ENCODE measurements at regions of chr3 and their contacts with region 1.

Region 1: DNA sequence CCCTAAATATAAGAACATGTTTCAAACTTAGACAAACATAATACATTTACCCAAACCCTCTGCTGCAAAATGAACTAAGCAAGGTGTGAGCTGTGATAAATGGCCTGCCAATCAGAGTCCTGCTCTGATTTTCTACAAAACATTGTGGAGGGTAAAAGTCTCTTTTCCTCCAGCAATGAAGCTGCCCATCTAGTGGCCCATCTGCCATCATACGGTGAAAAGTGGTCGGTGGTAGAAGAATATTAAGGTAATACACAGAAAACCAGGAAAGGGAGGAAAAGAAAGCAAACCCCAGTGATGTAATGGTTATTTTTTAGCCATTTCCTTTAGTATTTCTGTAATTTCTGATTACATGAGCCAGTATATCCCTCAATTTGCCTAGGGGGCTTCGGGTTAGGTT is 838.1 kb downstream of the TBL1XR1 start:
- DNase-seq: no peak
- H3K4me3 ChIP-seq: no peak overlapping the region
- H3K27ac ChIP-seq: no peak overlapping the region
- H3K4me1 ChIP-seq: no peaks in the 10 kb centered on the region
- H3K27me3 ChIP-seq: no peaks in the 10 kb centered on the region
- CTCF ChIP-seq: no peak
- POLR2A ChIP-seq: no peak

Region 2: DNA sequence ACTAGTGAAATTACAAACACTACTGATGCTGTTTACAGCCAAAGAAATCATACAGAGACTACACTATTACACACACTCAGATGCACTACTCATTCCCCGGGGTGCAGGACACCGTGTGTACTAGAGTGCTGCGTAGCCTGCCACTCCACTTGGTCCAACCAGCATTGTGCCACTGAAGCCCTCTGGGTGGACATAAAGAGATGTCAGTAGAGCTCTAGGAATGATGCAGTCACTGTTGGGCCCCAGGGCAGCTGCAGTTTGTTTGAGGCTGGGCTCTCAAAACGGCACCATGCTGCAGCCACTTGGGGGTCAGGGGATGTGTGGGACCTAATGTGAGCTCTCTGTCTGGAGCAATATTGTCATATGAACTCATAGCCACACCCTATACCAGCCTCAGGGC is 13.9 kb before region 1 on chr3:
- intact Hi-C with region 1: loop called (anchors 2 kb)
- DNase-seq: no peak
- H3K4me3 ChIP-seq: no peak overlapping the region
- H3K27ac ChIP-seq: no peak overlapping the region
- H3K4me1 ChIP-seq: no peaks in the 10 kb centered on the region
- H3K27me3 ChIP-seq: no peaks in the 10 kb centered on the region
- CTCF ChIP-seq: no peak
- POLR2A ChIP-seq: no peak

Measured in breast epithelium (tissue), 4 donors.